Activated CD4-positive, alpha-beta T cell treated with anti-CD3 and anti-CD28 coated beads, Interleukin-2, amount 10 ng/mL, durations not matched to agents 24 days and 14 days (primary cell): ENCODE measurements at regions of chr4 and their contacts with region 1.

Region 1: GRCh38 chr4:139030614-139031235 is 15.1 kb downstream of the NOCT start:
- DNase-seq: peak; percentile 93
- H3K4me3 Mint-ChIP-seq: no peak overlapping the region
- H3K27ac Mint-ChIP-seq: no peak overlapping the region
- H3K4me1 Mint-ChIP-seq: peaks cover 13% of the 10 kb centered on the region
- H3K27me3 Mint-ChIP-seq: no peaks in the 10 kb centered on the region

Region 2: GRCh38 chr4:139083956-139084803 is 53.5 kb after region 1 on chr4:
- intact Hi-C with region 1: loop called (anchors 1 kb)
- DNase-seq: peak; percentile 95
- H3K4me3 Mint-ChIP-seq: peak overlapping the region; percentile 100
- H3K27ac Mint-ChIP-seq: peak overlapping the region; percentile 100
- H3K4me1 Mint-ChIP-seq: peaks cover 30% of the 10 kb centered on the region
- H3K27me3 Mint-ChIP-seq: peaks cover 2% of the 10 kb centered on the region

Region 3: GRCh38 chr4:139099366-139099982 is 68.7 kb after region 1 on chr4:
- intact Hi-C with region 1: loop called (anchors 1 kb)
- DNase-seq: peak; percentile 90
- H3K4me3 Mint-ChIP-seq: no peak overlapping the region
- H3K27ac Mint-ChIP-seq: no peak overlapping the region
- H3K4me1 Mint-ChIP-seq: peaks cover 4% of the 10 kb centered on the region
- H3K27me3 Mint-ChIP-seq: no peaks in the 10 kb centered on the region